ENCODE measurements at regions of chr2 and their contacts with region 1.

Region 1: GRCh38 chr2:202609381-202610145 is 25.2 kb upstream of the FAM117B start:
- DNase-seq: peak; percentile 25
- H3K4me3 Mint-ChIP-seq: no peak overlapping the region
- H3K27ac Mint-ChIP-seq: no peak overlapping the region
- H3K4me1 Mint-ChIP-seq: peaks cover 10% of the 10 kb centered on the region
- H3K27me3 Mint-ChIP-seq: no peaks in the 10 kb centered on the region

Region 2: DNA sequence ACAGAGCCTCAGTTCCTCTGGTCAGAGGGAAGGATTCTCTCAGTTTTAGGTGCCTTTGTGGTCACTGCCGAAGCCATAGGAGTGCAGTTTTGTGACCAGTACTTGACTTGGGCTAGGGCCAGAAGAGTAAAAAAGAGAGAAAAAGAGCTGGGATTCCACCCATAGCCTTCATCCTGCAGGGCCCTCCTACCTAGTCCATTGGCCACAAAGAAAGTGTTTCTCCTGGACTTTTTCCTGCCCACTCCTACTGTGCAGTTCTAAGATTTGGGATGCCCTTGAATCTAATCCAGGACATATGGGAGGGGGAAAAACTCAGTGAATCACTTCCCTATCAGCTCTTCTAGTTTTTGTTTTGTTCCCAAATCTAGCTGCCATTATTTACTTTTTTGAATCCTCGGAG is 51.2 kb after region 1 on chr2:
- CTCF ChIA-PET with region 1: no interaction called
- POLR2A ChIA-PET with region 1: no interaction called
- intact Hi-C with region 1: no loop called
- DNase-seq: no peak
- H3K4me3 Mint-ChIP-seq: no peak overlapping the region
- H3K27ac Mint-ChIP-seq: no peak overlapping the region
- H3K4me1 Mint-ChIP-seq: peaks cover 59% of the 10 kb centered on the region
- H3K27me3 Mint-ChIP-seq: no peaks in the 10 kb centered on the region

Region 3: GRCh38 chr2:202765436-202765835 is 155.9 kb after region 1 on chr2:
- CTCF ChIA-PET with region 1: no interaction called
- POLR2A ChIA-PET with region 1: no interaction called
- intact Hi-C with region 1: loop called (anchors 10 kb)
- DNase-seq: no peak
- H3K4me3 Mint-ChIP-seq: no peak overlapping the region
- H3K27ac Mint-ChIP-seq: no peak overlapping the region
- H3K4me1 Mint-ChIP-seq: peaks cover 6% of the 10 kb centered on the region
- H3K27me3 Mint-ChIP-seq: no peaks in the 10 kb centered on the region

Measured in activated CD4-positive, alpha-beta memory T cell treated with anti-CD3 and anti-CD28 coated beads for 36 hours (primary cell).